ENCODE measurements at regions of chr6 and their contacts with region 1.

Region 1: GRCh38 chr6:49531774-49532569 is 18.5 kb upstream of the C6orf141 start:
- DNase-seq: no peak
- ATAC-seq: peak; percentile 91

Region 2: GRCh38 chr6:49606696-49607390 is 74.9 kb after region 1 on chr6:
- intact Hi-C with region 1: loop called in 1 of 2 experiments (anchors 5 kb)
- DNase-seq: peak in 1 of 2 donors; percentile 7
- ATAC-seq: peak; percentile 90

Region 3: GRCh38 chr6:49849213-49849907 is 317.4 kb after region 1 on chr6:
- intact Hi-C with region 1: loop called in 1 of 2 experiments (anchors 5 kb)
- DNase-seq: no peak
- ATAC-seq: peak; percentile 54

Measured in left colon (tissue), 2 donors.